GM13976 (cell line): ENCODE measurements at regions of chr19 and their contacts with region 1.

Region 1: DNA sequence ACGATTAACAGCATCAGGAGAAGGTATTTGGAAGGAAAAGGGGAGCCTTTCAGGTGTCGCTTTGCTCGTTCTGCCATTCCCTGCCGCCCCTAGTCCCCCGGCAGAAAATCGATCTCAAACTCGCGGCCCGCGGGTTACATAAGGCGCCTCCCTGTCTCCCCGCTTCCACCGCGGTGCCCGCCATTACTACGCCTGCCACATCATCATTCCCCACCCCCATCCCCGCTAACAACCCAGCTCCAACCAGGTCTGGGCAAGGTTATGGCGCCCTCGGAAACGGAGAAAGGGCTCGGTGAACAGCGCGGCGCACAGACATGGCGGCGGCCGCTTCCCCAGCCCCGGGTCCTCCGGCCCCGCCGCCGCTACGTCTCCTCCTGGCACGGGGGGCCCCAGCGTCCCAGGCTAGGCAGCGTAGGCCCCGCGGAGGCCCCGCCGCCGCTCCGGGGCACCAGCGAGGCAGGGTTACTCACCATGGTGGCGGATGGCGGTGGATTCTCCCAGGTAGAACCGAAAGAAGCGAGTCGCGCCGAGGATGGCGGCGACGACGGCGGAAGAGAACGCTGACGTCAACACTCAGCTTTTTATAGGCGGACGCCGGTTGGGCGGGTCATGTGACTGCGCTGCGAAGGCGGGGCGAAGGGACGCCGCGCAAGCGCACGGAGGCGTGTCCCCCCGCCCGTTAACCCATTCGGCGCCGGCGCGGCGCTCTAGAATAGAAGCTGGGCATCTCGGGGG is at the start of gene EEF2:
- DNase-seq: peak; percentile 96
- CTCF ChIP-seq: no peak

Region 2: GRCh38 chr19:3672993-3673392 is 312.1 kb before region 1 on chr19:
- in situ Hi-C with region 1: no loop called
- DNase-seq: no peak
- CTCF ChIP-seq: no peak

Region 3: DNA sequence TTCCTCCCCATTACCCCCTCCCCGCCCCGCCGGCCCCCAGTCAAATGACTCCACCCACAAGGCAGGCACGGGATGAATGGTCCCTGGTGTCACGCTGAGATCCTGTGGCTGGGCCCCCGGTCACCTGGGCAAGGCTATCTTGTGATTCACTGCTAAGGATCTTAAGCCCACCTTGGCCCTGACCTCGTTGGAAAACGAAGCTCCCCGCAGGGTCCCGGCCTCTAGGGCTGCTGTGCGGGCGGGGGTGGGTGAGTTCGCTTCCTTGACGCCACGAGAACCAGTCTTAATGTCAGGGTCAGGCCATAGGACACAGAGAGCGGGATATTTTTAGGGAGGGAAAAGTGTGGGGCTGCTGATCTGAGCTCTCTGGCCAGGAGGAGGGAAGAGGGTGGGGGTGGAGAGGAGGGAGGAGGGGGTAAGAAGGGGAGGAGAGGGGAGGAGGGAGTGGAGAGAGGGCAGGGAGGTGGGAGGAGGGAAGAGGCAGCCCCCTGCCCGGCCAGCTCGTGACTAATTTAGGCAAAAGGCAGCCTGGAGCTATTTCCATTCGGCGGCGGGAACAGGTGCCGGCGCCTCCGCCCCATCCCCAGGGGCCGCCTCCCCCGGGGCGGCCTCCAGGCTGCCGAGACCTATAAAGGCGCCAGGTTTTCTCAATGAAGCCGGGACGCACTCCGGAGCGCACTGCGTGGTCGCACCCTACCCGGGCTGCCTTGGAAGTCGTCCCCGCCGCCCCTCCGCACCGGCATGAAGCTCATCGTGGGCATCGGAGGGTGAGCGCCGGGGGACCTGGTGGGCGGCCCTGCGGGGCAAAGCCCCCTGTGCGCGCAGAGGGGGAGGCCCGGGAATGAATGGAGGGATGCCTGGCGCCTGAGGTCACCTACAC is 51.9 kb before region 1 on chr19 and contains the start of gene NMRK2:
- in situ Hi-C with region 1: no loop called
- DNase-seq: no peak
- CTCF ChIP-seq: no peak

Region 4: GRCh38 chr19:4208385-4209094 is 223.5 kb after region 1 on chr19:
- in situ Hi-C with region 1: loop called (anchors 10 kb)
- DNase-seq: peak; percentile 66
- CTCF ChIP-seq: peak; percentile 51